Testis (tissue), 5 donors: ENCODE measurements at regions of chr5 and their contacts with region 1.

Region 1: DNA sequence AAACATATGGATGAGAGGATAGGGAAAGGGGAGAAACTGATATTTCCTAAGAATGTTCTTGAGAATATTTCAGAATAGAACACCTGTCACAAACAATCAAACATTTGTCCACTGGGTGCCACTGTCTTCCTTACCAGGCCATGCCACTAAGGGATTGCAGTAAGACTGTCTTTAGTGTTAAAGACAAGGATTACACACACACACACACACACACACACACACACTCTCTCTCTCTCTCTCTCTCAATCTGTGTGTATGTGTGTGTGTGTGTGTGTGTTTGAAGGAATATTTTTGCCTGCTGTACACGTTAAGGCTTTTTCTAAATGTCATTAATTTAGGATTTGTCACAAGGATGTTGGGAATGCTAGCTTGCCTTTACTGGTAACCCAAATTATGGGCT is 54.4 kb downstream of the CCDC192 start:
- DNase-seq: peak; percentile 49
- H3K4me3 ChIP-seq: no peak overlapping the region
- H3K27ac ChIP-seq: no peak overlapping the region
- H3K4me1 ChIP-seq: no peaks in the 10 kb centered on the region
- H3K27me3 ChIP-seq: no peaks in the 10 kb centered on the region
- CTCF ChIP-seq: peak in 2 of 3 experiments; percentile 10 to 38
- POLR2A ChIP-seq: no peak

Region 2: GRCh38 chr5:127280491-127281220 is 476.9 kb before region 1 on chr5:
- intact Hi-C with region 1: no loop called
- DNase-seq: no peak
- H3K4me3 ChIP-seq: no peak overlapping the region
- H3K27ac ChIP-seq: no peak overlapping the region
- H3K4me1 ChIP-seq: no peaks in the 10 kb centered on the region
- H3K27me3 ChIP-seq: no peaks in the 10 kb centered on the region
- CTCF ChIP-seq: no peak
- POLR2A ChIP-seq: no peak

Region 3: DNA sequence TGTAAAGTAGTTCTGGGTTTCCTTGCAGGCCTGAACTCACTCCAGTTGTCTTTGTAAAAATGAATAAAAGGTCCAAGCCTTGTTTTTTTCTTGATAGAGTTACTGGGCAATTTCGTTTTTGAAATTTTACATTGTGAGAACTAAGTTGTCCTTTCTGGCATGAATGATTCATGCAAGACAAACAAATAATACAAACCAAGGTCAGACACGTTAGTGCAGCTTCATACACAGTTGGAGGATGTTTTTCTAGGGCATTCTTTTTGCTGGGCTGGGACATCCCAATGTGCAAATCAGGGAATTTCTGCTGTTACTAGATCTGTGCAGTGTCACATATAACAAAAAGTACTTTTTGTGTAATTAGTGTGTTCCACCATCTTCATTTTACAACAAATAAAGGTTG is 371.0 kb before region 1 on chr5:
- intact Hi-C with region 1: loop called (anchors 10 kb)
- DNase-seq: no peak
- H3K4me3 ChIP-seq: no peak overlapping the region
- H3K27ac ChIP-seq: no peak overlapping the region
- H3K4me1 ChIP-seq: no peaks in the 10 kb centered on the region
- H3K27me3 ChIP-seq: no peaks in the 10 kb centered on the region
- CTCF ChIP-seq: no peak
- POLR2A ChIP-seq: no peak

Region 4: GRCh38 chr5:127849891-127850290 is 92.3 kb after region 1 on chr5:
- intact Hi-C with region 1: no loop called
- DNase-seq: no peak
- H3K4me3 ChIP-seq: no peak overlapping the region
- H3K27ac ChIP-seq: no peak overlapping the region
- H3K4me1 ChIP-seq: no peaks in the 10 kb centered on the region
- H3K27me3 ChIP-seq: no peaks in the 10 kb centered on the region
- CTCF ChIP-seq: no peak
- POLR2A ChIP-seq: no peak